ENCODE measurements at regions of chr2 and their contacts with region 1.

Region 1: DNA sequence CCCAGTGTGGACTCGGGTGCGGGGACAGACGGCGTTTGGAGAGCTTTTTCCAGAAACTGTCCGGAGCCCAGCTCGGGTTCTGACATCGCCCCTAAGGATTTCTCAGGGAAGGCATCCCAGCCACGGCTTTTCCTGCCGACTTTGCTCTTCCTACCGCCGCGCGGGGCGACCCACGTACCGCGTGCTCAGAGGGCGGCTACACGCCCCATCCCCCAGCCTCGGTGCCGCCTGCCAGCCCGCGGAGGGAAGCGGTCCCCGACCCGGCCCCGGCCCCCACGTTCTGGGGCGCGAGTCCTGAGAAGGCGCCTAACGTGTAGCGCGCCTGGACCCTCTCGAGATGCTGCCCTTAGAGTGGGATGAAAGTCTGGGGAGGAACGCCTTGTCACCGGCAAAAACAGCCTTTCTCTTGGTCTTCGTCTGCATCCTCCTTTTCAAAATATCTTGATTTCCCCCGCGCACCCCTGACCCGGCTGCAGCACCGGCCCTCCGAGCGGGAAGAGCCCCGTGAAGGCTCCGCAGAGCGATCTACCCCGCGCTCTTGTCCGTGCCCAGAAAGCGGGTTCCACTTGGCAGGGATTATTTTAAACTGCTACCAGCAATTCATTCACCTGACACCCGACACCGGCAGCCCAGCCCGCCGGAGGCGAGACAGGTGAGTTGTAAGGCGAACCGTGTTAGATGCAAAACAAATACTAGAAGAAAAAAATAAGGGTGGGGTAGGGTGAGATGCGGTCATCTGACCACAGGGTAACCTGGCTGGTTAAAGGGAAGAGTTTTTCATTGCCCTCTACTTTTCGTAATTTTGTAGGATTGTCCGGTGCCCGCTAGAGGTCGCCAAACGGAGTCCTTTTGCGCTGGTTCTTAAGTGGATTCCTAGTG is 812 bp upstream of the KCNG3 start:
- DNase-seq: peak; percentile 83
- H3K4me3 ChIP-seq: peak overlapping the region; percentile 45 to 85 (median 62)
- H3K27ac ChIP-seq: no peak overlapping the region
- H3K4me1 ChIP-seq: peaks cover 6 to 27% (median 24%) of the 10 kb centered on the region in 6 donors
- H3K27me3 ChIP-seq: peaks cover 0 to 66% (median 36%) of the 10 kb centered on the region in 7 donors
- CTCF ChIP-seq: peak in 10 of 11 experiments; percentile 31 to 85 (median 72)
- POLR2A ChIP-seq: no peak

Region 2: GRCh38 chr2:42663106-42663780 is 168.6 kb after region 1 on chr2:
- intact Hi-C with region 1: loop called (anchors 5 kb)
- DNase-seq: peak; percentile 85
- H3K4me3 ChIP-seq: no peak overlapping the region
- H3K27ac ChIP-seq: peak overlapping the region in 4 of 8 donors; percentile 0 to 61 (median 28)
- H3K4me1 ChIP-seq: peaks cover 0 to 22% (median 12%) of the 10 kb centered on the region in 6 donors
- H3K27me3 ChIP-seq: no peaks in the 10 kb centered on the region
- CTCF ChIP-seq: peak; percentile 70 to 93 (median 84)
- POLR2A ChIP-seq: no peak